ENCODE measurements at regions of chr2 and their contacts with region 1.

Region 1: GRCh38 chr2:47339745-47340541 is 63.0 kb upstream of the MSH2 start:
- DNase-seq: no peak
- ATAC-seq: no peak

Region 2: GRCh38 chr2:47386551-47386950 is 46.6 kb after region 1 on chr2:
- intact Hi-C with region 1: loop called (anchors 5 kb)
- DNase-seq: no peak
- ATAC-seq: no peak

Measured in left ventricle myocardium superior (tissue), 1 donor.